ENCODE measurements at regions of chr13 and their contacts with region 1.

Region 1: GRCh38 chr13:30132623-30133553 is 174.5 kb downstream of the KATNAL1 start:
- DNase-seq: no peak
- H3K4me3 ChIP-seq: no peak overlapping the region
- H3K27me3 ChIP-seq: no peaks in the 10 kb centered on the region
- CTCF ChIP-seq: peak; percentile 94

Region 2: DNA sequence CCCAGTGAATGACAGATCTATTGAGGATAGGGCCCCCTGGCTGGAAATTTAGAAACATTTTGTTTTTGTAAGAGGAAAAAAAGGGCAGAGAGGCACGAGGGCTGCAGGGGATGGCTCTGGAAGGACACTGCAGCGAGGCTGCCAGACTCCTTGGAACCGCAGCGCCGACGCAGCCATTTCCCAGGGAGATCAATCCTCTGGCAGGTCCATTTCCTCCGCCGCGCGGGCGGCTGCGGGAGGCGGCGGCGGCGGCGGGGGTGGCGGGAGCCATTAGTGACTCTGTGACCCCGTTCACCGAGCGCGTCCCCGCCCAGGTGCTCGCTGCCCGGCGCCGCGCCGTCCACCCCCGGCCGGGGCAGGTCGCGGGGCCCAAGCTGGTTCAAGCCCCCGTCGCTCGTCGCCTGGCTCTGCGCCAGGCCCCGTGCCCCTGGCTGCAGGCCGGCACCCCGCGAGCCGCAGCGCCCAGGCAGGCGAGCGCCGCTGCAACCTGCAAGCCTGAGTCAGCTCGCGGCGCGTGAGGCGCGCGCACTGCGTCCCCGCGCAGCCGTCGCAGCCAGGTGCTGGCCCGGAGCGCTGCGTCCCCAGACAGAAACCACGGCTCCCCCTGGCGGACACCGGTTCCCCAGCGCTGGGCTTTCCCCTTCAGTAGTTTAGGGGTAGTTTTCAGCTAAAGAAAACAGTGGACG is 18.2 kb before region 1 on chr13:
- CTCF ChIA-PET with region 1: interaction called, 20 read pairs
- POLR2A ChIA-PET with region 1: no interaction called
- DNase-seq: no peak
- H3K4me3 ChIP-seq: peak overlapping the region; percentile 43
- H3K27me3 ChIP-seq: no peaks in the 10 kb centered on the region
- CTCF ChIP-seq: peak; percentile 90

Region 3: GRCh38 chr13:30153545-30154441 is 20.9 kb after region 1 on chr13:
- CTCF ChIA-PET with region 1: interaction called, 73 read pairs
- POLR2A ChIA-PET with region 1: no interaction called
- DNase-seq: no peak
- H3K4me3 ChIP-seq: no peak overlapping the region
- H3K27me3 ChIP-seq: peaks cover 7% of the 10 kb centered on the region
- CTCF ChIP-seq: no peak

Region 4: DNA sequence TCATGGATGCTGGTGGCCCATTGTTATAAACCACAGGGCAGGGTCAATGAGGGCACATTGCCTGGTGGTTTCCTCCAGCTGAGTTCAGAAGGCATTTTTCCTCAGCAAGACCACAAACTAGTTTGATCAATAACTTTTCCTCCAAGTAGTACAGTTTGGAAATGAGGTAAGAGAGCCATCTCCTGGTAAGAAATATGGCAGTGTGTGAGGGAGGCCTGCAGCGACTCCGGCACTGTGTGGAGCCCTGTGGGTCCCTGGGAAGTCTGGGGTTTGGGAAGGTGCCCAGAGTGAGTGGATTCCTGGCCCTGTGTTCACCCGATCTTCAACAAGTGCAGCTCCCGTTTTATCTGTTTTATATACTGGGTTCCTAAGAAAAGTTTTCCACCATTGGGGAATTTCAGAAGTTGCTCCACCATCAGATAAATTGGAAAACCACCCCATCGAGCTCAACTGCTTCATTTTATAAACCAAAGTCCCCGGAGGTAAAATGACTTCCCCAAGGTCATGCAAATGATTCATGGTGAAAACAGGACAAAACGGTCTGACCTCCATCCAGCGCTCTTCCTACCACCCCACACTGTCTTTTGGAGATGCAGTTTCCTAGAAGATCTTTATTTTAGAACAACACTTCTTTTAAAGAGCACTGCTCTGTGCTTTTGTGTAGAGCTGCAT is 26.0 kb after region 1 on chr13:
- CTCF ChIA-PET with region 1: interaction called, 73 read pairs
- POLR2A ChIA-PET with region 1: no interaction called
- DNase-seq: no peak
- H3K4me3 ChIP-seq: no peak overlapping the region
- H3K27me3 ChIP-seq: no peaks in the 10 kb centered on the region
- CTCF ChIP-seq: peak; percentile 58

Region 5: DNA sequence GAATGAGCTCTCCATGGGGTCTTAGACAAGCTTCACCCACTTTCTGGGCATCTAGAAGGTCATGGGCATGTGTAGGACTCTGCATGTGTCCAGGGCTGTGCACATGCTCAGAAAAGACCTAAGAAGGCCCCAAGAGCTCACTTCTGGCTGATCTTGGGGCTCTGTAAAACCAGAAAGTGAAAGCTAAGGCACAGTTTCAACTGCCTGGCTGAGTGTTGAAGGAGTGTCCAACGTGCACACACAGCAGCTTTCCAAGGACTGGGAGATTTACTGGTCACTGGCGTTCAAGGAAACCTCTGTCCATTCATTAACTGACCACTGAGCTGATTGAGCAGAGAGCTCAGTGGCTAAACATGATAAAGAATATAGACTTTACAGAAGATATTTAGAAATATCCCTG is 36.6 kb after region 1 on chr13:
- CTCF ChIA-PET with region 1: interaction called, 11 read pairs
- POLR2A ChIA-PET with region 1: no interaction called
- DNase-seq: no peak
- H3K4me3 ChIP-seq: no peak overlapping the region
- H3K27me3 ChIP-seq: peaks cover 5% of the 10 kb centered on the region
- CTCF ChIP-seq: no peak

Region 6: DNA sequence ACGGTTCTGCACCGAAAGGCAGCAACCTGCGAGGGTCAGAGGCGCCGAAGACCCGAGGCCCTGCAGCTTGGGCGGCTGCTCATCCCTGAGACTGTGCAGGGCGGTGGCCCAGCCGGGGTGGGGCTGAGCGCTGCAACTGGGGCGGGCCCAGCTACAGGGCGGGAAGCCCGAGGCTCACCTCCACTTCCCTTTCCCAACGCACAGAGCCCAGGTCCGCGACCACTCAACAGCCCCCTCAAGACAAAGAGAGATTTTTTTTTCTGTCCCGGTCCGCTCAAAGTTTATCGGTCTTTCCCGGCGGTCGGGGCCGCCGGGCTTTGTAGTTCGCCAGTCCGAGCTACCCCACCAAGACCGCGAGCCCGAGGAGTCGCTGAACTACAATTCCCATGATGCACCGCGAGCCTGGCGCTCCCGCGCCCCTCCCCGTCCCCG is 173.9 kb after region 1 on chr13:
- CTCF ChIA-PET with region 1: interaction called, 11 read pairs
- POLR2A ChIA-PET with region 1: no interaction called
- DNase-seq: peak; percentile 44
- H3K4me3 ChIP-seq: peak overlapping the region; percentile 75
- H3K27me3 ChIP-seq: no peaks in the 10 kb centered on the region
- CTCF ChIP-seq: no peak

Region 7: DNA sequence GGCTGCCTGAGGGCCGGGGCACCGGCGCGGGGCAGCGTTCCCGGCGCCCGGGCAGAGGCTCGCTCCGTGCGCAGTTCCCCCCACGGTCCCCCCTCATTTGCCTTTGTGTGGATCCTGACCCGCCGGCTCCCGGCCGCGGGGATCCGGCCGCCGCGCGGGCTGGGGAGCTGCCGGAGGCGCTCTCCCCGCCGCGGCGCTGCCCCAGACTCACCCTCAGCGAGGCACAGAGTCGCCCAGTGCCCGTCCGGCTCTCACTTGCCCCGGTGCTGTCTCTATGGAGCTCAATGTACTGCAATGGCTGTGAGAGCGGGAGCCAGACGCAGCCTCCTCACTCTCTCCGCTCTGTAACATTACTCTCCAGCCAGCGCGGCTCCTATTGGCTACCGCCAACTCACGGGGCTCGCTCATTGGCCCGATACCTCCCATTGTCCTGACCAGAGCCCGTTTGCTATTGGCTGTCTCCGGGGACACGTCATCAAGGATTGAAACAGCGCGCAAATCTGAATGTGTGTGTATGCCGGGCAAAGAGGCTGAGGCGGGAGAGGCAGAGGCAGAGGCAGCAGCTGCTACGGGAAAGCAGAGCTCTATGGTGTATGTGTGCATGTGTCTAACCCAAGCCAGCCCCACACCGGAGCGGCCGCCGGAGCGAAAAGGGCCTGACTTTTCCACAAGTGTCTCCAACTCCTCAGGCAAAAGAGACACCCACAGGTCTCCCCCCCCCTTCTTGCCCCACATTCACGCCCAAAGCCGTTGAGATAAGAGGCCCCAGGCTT is 332.9 kb after region 1 on chr13 and contains the start of gene HMGB1:
- CTCF ChIA-PET with region 1: interaction called, 24 read pairs
- POLR2A ChIA-PET with region 1: no interaction called
- DNase-seq: peak; percentile 85
- H3K4me3 ChIP-seq: peak within 1 kb of the TSS; percentile 60
- H3K27me3 ChIP-seq: no peaks in the 10 kb centered on the region
- CTCF ChIP-seq: no peak
- polyA plus RNA-seq, gene HMGB1: 93.4 and 171 TPM in 2 replicates

Measured in BJ (cell line).